Stomach (tissue), 19 donors: ENCODE measurements at regions of chr13 and their contacts with region 1.

Region 1: GRCh38 chr13:37109051-37109678 is 3.7 kb upstream of the CSNK1A1L start:
- DNase-seq: peak in 1 of 2 donors; percentile 80
- H3K4me3 ChIP-seq: no peak overlapping the region
- H3K27ac ChIP-seq: no peak overlapping the region
- H3K4me1 ChIP-seq: peaks cover 0 to 14% (median 6%) of the 10 kb centered on the region in 4 donors
- H3K27me3 ChIP-seq: no peaks in the 10 kb centered on the region
- CTCF ChIP-seq: peak in 5 of 7 experiments; percentile 17 to 62 (median 45)
- EP300 ChIP-seq: no peak
- POLR2A ChIP-seq: no peak

Region 2: GRCh38 chr13:36897054-36897616 is 212.0 kb before region 1 on chr13:
- intact Hi-C with region 1: no loop called
- DNase-seq: no peak
- H3K4me3 ChIP-seq: no peak overlapping the region
- H3K27ac ChIP-seq: no peak overlapping the region
- H3K4me1 ChIP-seq: peaks cover 0 to 1% (median 0%) of the 10 kb centered on the region in 4 donors
- H3K27me3 ChIP-seq: no peaks in the 10 kb centered on the region
- CTCF ChIP-seq: no peak
- EP300 ChIP-seq: no peak
- POLR2A ChIP-seq: no peak

Region 3: DNA sequence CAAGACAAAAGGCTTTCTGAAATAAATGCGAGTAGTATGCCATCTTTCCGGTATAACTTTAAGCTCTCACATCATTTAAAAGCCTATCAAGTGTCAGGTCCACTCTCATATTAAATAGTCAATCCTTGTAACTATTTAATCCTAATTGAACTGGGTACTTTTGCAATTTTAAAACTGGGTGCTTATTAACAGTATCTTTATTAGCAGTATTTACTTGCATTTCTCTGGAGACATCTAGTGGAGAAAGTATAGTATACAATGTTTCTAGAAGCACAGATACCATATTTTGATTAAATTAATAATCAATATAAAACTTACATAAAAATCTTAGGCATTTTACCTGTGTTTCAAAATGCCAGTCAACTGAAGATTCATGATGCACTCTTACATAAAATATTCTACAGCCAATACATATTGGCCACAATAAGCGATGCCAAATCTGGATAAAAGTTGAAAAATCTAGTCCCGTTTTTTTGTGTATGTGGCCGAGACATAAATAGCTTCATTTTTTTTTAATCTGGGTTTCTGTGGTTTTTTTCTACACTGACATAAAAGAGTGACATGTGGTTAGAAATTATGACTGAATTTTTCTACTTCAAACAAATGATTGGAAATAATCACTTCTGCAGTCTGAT is 493.7 kb after region 1 on chr13:
- intact Hi-C with region 1: loop called (anchors 10 kb)
- DNase-seq: no peak
- H3K4me3 ChIP-seq: no peak overlapping the region
- H3K27ac ChIP-seq: no peak overlapping the region
- H3K4me1 ChIP-seq: peaks cover 0 to 10% (median 4%) of the 10 kb centered on the region in 4 donors
- H3K27me3 ChIP-seq: no peaks in the 10 kb centered on the region
- CTCF ChIP-seq: peak in 4 of 7 experiments; percentile 24 to 43 (median 39)
- EP300 ChIP-seq: no peak
- POLR2A ChIP-seq: no peak